Sigmoid colon (tissue), 7 donors: ENCODE measurements at regions of chr1 and their contacts with region 1.

Region 1: DNA sequence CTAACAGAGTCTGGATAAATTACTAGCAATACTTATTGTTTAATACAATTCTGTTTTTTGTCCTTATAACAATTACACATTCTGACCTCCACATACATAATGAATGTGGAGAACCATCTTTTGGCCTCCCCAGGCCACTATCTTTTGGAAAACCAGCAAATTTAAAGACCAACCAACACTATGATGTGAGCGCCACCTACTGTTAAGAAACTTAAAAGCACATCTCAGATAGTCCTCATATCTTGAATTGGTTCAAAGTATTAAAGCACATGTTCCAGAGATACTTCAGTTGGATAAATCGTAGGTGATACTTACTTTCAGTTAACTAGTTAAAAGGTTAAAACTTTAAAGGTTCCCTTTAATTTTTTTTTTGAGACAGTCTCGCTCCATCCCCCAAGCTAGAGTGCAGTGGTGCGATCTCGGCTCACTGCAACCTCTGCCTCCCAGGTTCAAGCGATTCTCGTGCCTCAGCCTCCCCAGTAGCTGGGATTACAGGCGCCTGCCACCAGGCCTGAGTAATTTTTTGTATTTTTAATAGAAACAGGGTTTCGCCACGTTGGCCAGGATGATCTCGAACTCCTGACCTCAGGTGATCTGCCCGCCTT is 29.3 kb upstream of the USP1 start:
- DNase-seq: no peak
- H3K4me3 ChIP-seq: no peak overlapping the region
- H3K27ac ChIP-seq: no peak overlapping the region
- H3K4me1 ChIP-seq: no peaks in the 10 kb centered on the region
- H3K27me3 ChIP-seq: no peaks in the 10 kb centered on the region
- CTCF ChIP-seq: peak; percentile 44 to 72 (median 58)
- EP300 ChIP-seq: no peak
- POLR2A ChIP-seq: no peak

Region 2: DNA sequence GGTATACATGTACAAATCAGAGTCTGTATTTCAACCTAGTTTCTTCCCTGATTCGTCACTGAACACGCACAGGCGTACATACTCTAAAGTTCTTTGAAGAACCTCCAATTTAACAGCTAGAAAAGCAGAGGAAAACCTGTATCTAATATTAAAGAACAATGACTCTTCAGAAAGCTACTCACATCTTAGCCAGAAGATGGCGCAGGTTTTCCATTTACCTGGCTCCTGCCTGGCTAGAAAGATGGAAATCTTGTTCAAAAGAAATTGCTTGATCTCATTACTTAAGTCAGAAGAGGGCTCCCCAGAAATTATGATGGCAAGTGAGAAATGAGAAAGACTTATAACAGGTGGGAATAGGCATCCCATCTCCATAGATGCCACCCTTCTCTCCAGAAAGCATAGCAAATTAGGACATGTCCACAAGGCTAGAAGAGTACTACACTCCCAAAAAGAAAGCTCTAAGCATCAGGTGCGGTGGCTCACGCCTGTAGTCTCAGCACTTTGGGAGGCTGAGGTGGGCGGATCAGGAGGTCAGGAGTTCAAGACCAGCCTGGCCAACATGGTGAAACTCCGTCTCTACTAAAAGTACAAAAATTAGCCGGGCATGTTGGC is 231.8 kb before region 1 on chr1:
- intact Hi-C with region 1: loop called (anchors 1 kb)
- DNase-seq: no peak
- H3K4me3 ChIP-seq: no peak overlapping the region
- H3K27ac ChIP-seq: no peak overlapping the region
- H3K4me1 ChIP-seq: no peaks in the 10 kb centered on the region
- H3K27me3 ChIP-seq: no peaks in the 10 kb centered on the region
- CTCF ChIP-seq: peak; percentile 16 to 65 (median 60)
- EP300 ChIP-seq: no peak
- POLR2A ChIP-seq: no peak

Region 3: DNA sequence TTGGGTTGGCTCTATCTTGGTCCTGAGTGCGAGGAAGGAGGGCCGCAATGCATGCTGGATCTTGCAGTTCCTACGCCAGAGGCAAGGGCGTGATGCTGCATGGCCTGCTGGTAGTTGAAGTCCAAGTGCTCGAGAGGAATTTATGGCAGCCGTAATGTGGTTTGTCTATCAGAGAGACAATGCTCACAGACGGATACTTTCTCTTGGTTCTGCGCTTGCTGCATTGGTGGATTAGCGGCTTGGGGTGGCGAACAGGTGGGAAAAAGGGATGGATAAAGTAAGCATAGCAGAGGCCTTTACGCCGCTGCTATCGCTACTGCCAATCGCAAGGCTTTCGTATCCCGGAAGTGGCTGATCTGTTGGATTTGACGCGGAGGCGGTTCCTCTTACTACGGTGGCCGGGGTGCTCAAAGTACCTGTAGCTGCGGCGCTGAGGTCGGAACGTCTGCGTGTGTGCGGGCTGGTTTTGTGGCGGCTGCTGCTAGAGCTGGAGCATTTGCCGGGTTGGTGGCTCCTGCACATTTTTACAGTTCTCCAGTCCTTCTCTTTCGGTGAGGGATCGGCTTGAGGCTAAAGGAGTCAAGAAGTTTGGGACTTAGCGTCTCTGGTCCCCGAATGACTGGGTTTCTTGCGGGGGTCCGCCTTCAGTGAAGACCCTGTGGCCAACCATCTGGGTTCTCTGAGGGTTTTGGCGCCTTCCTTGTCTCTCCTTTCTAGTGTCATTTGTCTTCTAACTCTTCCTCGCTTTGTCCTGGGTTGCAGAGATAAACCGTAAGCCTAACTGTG is 376.4 kb after region 1 on chr1 and contains the start of gene ATG4C:
- intact Hi-C with region 1: no loop called
- DNase-seq: peak; percentile 98
- H3K4me3 ChIP-seq: peak within 1 kb of the TSS; percentile 62 to 78 (median 71)
- H3K27ac ChIP-seq: peak within 1 kb of the TSS; percentile 87 to 95 (median 92)
- H3K4me1 ChIP-seq: peaks cover 0 to 17% (median 8%) of the 10 kb centered on the region in 4 donors
- H3K27me3 ChIP-seq: no peaks in the 10 kb centered on the region
- CTCF ChIP-seq: peak in 3 of 4 experiments; percentile 9 to 31 (median 12)
- EP300 ChIP-seq: no peak
- POLR2A ChIP-seq: peak; percentile 11 to 66
- total RNA-seq, gene ATG4C: 4.8 to 15.5 (median 11.8) TPM